Activated T-helper 1 cell treated with anti-CD3 and anti-CD28 coated beads, Interleukin-12 subunit alpha, Interleukin-12 subunit beta, Interleukin-2, Interleukin-4 antibody, amounts not matched to agents 30 ng/mL and 10 ng/mL and 1 ng/mL, durations not matched to agents 14 hours and 24 hours and 36 hours (primary cell): ENCODE measurements at regions of chr4 and their contacts with region 1.

Region 1: DNA sequence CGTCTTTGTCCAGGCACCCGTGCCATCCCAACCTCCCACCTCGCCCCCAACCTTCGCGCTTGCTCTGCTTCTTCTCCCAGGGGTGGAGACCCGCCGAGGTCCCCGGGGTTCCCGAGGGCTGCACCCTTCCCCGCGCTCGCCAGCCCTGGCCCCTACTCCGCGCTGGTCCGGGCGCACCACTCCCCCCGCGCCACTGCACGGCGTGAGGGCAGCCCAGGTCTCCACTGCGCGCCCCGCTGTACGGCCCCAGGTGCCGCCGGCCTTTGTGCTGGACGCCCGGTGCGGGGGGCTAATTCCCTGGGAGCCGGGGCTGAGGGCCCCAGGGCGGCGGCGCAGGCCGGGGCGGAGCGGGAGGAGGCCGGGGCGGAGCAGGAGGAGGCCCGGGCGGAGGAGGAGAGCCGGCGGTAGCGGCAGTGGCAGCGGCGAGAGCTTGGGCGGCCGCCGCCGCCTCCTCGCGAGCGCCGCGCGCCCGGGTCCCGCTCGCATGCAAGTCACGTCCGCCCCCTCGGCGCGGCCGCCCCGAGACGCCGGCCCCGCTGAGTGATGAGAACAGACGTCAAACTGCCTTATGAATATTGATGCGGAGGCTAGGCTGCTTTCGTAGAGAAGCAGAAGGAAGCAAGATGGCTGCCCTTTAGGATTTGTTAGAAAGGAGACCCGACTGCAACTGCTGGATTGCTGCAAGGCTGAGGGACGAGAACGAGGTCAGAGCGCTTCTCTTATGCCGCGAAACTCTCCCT is at the start of gene TET2:
- DNase-seq: peak; percentile 77
- H3K4me3 Mint-ChIP-seq: peak within 1 kb of the TSS; percentile 95
- H3K27ac Mint-ChIP-seq: peak within 1 kb of the TSS; percentile 98
- H3K4me1 Mint-ChIP-seq: peaks cover 50% of the 10 kb centered on the region
- H3K27me3 Mint-ChIP-seq: no peaks in the 10 kb centered on the region
- total RNA-seq, gene TET2: 28.7 and 28.8 TPM in 2 replicates

Region 2: GRCh38 chr4:104930298-104930697 is 216.1 kb before region 1 on chr4:
- intact Hi-C with region 1: loop called (anchors 5 kb)
- DNase-seq: no peak
- H3K4me3 Mint-ChIP-seq: no peak overlapping the region
- H3K27ac Mint-ChIP-seq: no peak overlapping the region
- H3K4me1 Mint-ChIP-seq: peaks cover 46% of the 10 kb centered on the region
- H3K27me3 Mint-ChIP-seq: peaks cover 4% of the 10 kb centered on the region

Region 3: GRCh38 chr4:105191621-105192210 is 45.3 kb after region 1 on chr4:
- intact Hi-C with region 1: loop called (anchors 1 kb)
- DNase-seq: no peak
- H3K4me3 Mint-ChIP-seq: peak overlapping the region; percentile 8
- H3K27ac Mint-ChIP-seq: peak overlapping the region; percentile 74
- H3K4me1 Mint-ChIP-seq: peaks cover 53% of the 10 kb centered on the region
- H3K27me3 Mint-ChIP-seq: no peaks in the 10 kb centered on the region

Region 4: DNA sequence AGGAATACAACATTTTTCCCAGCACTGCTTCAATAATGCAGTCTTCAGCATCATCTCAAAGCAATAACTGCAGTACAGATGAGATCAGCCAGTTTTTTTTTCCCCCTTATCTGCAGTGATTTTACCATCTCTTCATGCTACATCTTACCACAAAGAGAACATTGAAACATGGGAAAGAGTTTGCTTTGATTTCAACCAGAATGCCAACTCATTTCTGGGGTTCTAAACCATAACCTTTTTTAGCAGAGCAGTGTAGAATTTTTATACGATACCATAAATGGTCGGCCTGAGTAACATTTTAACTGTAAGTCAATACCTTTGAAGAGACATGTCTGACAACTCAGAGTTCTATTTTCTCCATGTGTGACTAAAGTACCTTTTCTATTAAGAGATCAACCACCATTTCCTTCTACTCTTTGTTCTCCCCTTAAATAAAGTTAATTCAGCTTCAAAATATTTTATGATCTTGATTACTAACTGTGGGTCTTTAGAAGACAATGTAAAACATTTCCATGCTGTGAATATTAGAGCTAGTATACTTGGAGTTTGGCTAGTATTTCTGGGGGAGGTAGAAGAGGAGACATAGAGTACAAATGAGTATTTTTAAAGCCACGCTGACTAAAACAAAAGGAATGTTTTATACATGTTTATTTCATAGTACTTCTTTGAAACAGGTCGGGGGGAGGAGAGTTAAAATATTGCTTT is 69.3 kb after region 1 on chr4:
- intact Hi-C with region 1: loop called (anchors 1 kb)
- DNase-seq: no peak
- H3K4me3 Mint-ChIP-seq: peak overlapping the region; percentile 23
- H3K27ac Mint-ChIP-seq: peak overlapping the region; percentile 46
- H3K4me1 Mint-ChIP-seq: peaks cover 20% of the 10 kb centered on the region
- H3K27me3 Mint-ChIP-seq: no peaks in the 10 kb centered on the region

Region 5: GRCh38 chr4:105708530-105709391 is 562.3 kb after region 1 on chr4 and contains the starts of genes GSTCD and INTS12:
- intact Hi-C with region 1: loop called (anchors 2 kb)
- DNase-seq: peak; percentile 83
- H3K4me3 Mint-ChIP-seq: peak within 1 kb of the TSS; percentile 99
- H3K27ac Mint-ChIP-seq: peak within 1 kb of the TSS; percentile 95
- H3K4me1 Mint-ChIP-seq: peaks cover 21% of the 10 kb centered on the region
- H3K27me3 Mint-ChIP-seq: no peaks in the 10 kb centered on the region
- total RNA-seq, gene GSTCD: 17.0 and 20.9 TPM in 2 replicates
- total RNA-seq, gene INTS12: 18.7 and 22.4 TPM in 2 replicates

Region 6: DNA sequence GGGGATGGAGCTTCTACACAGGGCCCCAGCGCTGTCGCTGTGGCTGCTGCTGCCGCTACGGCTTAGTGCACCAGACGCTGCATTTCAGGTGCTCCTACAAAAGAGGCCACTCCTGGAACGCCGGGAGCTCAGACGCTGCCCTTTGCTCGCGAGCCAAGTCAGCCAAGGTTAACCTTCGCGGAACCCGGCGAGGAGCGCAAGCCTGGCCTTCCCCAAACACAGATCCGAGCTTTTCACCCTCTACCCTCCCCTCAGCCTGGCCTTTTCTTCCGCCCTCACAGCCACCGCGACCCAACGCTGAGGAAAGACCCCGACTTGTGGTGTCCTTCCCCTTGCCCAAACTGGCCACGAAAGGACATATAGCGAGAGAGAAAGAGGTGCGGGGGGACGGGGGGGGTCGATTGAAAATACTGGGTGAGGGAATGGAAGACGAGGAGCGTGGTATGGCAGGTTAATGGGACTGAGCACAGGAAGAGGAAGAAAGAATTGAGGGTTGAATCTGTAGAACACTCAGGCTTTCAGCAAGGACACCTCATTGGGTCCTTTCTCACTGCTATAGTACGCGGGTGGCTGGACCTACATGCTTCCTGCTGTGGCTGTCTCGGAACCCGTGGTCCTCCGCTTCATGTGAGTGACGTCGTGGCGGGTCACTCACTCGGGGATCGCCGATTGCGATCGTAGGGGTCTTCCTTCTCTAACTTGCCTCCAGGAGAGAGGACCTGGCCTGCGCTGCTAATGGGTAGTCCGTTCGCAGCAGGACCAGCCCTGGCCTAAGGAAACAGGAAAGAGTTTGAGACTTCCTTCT is 1169.7 kb after region 1 on chr4 and contains the starts of genes AIMP1 and TBCK:
- intact Hi-C with region 1: loop called (anchors 5 kb)
- DNase-seq: peak; percentile 83
- H3K4me3 Mint-ChIP-seq: no peak within 1 kb of the TSS
- H3K27ac Mint-ChIP-seq: no peak within 1 kb of the TSS
- H3K4me1 Mint-ChIP-seq: peaks cover 30% of the 10 kb centered on the region
- H3K27me3 Mint-ChIP-seq: no peaks in the 10 kb centered on the region
- total RNA-seq, gene AIMP1: 86.4 and 86.9 TPM in 2 replicates
- total RNA-seq, gene TBCK: 24.4 and 25.1 TPM in 2 replicates